MCF 10A (cell line): ENCODE measurements at regions of chr22 and their contacts with region 1.

Region 1: DNA sequence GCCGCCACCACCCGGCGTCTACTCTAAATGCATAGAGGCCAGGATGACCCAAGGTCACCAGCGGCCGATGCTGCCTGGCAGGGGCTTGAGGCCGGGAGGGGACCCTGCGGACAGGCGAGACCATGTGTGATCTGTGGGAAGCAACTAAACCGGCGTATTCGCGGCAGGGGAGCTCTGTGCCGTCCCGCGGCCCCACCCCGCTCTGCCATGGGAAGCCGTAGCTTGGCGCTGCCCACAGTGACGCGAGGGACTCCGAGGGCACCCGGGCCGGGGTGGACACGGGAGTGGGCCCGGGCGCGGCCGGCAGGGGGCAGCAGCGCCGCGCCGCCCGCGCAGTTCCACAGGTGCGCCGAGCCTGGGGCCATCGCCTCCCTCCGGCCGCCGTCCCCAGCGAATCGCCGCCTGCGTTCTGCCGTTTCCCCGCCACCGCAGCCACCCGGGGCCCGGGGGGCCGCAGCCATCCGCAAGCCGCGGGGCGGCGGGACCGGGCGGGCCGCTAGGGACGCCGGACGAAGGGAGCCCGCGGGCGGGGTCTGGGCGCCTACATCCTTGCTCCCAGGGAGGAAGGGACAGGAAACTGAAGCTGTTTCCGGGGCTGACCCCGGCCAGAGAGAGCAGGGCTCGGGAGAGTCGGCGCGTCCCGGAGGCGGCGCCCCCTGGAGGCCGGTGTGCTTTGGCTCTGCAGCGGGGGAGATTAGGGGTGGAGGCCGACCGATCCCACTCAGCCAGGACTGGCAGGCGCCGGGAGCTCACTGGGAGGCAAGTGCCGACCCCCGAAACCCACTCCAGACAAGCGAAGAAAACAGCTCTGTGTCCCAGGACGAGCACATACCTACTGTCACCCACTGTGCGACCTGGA is 12.5 kb upstream of the HDHD5 start:
- DNase-seq: peak; percentile 87
- H3K4me3 Mint-ChIP-seq: peak overlapping the region; percentile 91
- H3K27ac Mint-ChIP-seq: peak overlapping the region; percentile 99
- H3K4me1 Mint-ChIP-seq: peaks cover 6% of the 10 kb centered on the region
- H3K27me3 Mint-ChIP-seq: no peaks in the 10 kb centered on the region
- CTCF ChIP-seq: peak; percentile 56

Region 2: DNA sequence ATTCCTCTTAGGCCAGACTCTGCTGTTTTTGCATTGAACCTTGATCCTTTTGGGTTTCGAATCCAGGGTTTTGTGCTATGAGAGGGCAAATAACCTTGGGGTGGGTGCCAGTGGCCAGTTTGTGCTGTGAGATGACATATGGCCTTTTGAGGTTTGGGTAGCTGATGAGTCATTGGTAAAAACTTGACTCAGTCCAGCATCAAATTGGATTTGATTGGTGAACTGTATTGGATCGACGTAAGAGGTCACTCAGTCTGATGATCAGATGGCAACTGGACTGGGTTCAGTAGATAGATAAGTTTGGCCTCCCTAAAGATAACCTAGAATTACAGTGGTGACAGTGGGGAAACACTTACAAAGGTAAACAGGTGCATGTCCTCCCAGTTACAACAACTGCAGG is 305.4 kb before region 1 on chr22:
- CTCF ChIA-PET with region 1: no interaction called
- POLR2A ChIA-PET with region 1: no interaction called
- intact Hi-C with region 1: no loop called
- DNase-seq: peak; percentile 57
- H3K4me3 Mint-ChIP-seq: no peak overlapping the region
- H3K27ac Mint-ChIP-seq: no peak overlapping the region
- H3K4me1 Mint-ChIP-seq: no peaks in the 10 kb centered on the region
- H3K27me3 Mint-ChIP-seq: no peaks in the 10 kb centered on the region
- CTCF ChIP-seq: no peak

Region 3: DNA sequence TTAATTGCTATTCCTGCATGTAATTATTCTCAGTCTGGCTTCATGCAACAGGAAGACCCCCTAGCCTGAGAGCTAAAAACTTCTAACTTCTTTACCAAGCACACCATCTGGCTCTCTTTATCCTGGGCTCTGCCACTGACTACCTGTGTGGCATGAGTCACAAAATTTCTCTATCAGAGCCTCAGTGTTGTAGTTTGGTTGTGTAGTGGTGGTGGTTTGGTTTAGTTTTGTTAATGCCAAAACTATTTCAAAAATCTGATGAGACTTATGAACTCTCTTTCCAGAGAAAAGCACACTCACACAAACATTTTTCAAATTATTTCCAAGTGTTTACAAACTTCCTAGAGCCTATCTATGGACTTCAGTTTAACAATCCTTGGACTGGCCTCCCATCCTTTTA is 94.3 kb before region 1 on chr22:
- CTCF ChIA-PET with region 1: interaction called, 33 read pairs
- POLR2A ChIA-PET with region 1: interaction called, 4 read pairs
- intact Hi-C with region 1: loop called (anchors 1 kb)
- DNase-seq: no peak
- H3K4me3 Mint-ChIP-seq: no peak overlapping the region
- H3K27ac Mint-ChIP-seq: no peak overlapping the region
- H3K4me1 Mint-ChIP-seq: no peaks in the 10 kb centered on the region
- H3K27me3 Mint-ChIP-seq: no peaks in the 10 kb centered on the region
- CTCF ChIP-seq: no peak

Region 4: GRCh38 chr22:17158568-17159503 is 12.7 kb before region 1 on chr22 and contains the start of gene HDHD5:
- CTCF ChIA-PET with region 1: interaction called, 74 read pairs
- POLR2A ChIA-PET with region 1: interaction called, 51 read pairs
- intact Hi-C with region 1: loop called (anchors 1 kb)
- DNase-seq: peak; percentile 83
- H3K4me3 Mint-ChIP-seq: peak within 1 kb of the TSS; percentile 86
- H3K27ac Mint-ChIP-seq: peak within 1 kb of the TSS; percentile 75
- H3K4me1 Mint-ChIP-seq: peaks cover 13% of the 10 kb centered on the region
- H3K27me3 Mint-ChIP-seq: no peaks in the 10 kb centered on the region
- CTCF ChIP-seq: no peak
- total RNA-seq, gene HDHD5: 38.7 and 51.8 TPM in 2 replicates

Region 5: DNA sequence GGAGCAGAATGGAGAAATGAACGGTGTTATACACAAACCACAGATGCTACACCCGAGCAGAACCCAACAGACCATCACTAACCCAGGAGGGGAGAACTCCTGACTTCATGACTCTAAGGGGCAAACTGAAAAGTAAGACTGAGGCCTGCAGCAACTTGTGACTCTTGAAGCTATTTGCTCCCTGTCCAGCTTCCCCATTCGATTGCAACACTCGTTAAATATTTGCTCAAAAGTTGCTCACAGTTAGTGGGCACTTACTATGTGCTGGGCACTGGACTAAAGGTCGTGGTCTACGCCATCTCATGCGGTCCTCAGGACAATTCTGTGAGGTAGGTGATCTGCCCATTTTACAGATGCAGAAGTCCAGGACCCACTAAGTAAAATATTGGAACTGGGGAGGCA is 57.2 kb after region 1 on chr22:
- CTCF ChIA-PET with region 1: interaction called, 23 read pairs
- POLR2A ChIA-PET with region 1: no interaction called
- intact Hi-C with region 1: no loop called
- DNase-seq: no peak
- H3K4me3 Mint-ChIP-seq: no peak overlapping the region
- H3K27ac Mint-ChIP-seq: no peak overlapping the region
- H3K4me1 Mint-ChIP-seq: no peaks in the 10 kb centered on the region
- H3K27me3 Mint-ChIP-seq: no peaks in the 10 kb centered on the region
- CTCF ChIP-seq: no peak

Region 6: GRCh38 chr22:17387356-17387755 is 215.8 kb after region 1 on chr22:
- CTCF ChIA-PET with region 1: no interaction called
- POLR2A ChIA-PET with region 1: no interaction called
- intact Hi-C with region 1: no loop called
- DNase-seq: no peak
- H3K4me3 Mint-ChIP-seq: no peak overlapping the region
- H3K27ac Mint-ChIP-seq: no peak overlapping the region
- H3K4me1 Mint-ChIP-seq: no peaks in the 10 kb centered on the region
- H3K27me3 Mint-ChIP-seq: no peaks in the 10 kb centered on the region
- CTCF ChIP-seq: no peak

Region 7: GRCh38 chr22:17486313-17486712 is 314.8 kb after region 1 on chr22:
- CTCF ChIA-PET with region 1: interaction called, 53 read pairs
- POLR2A ChIA-PET with region 1: interaction called, 4 read pairs
- intact Hi-C with region 1: no loop called
- DNase-seq: no peak
- H3K4me3 Mint-ChIP-seq: no peak overlapping the region
- H3K27ac Mint-ChIP-seq: no peak overlapping the region
- H3K4me1 Mint-ChIP-seq: no peaks in the 10 kb centered on the region
- H3K27me3 Mint-ChIP-seq: no peaks in the 10 kb centered on the region
- CTCF ChIP-seq: no peak